ENCODE measurements at regions of chr9 and their contacts with region 1.

Region 1: DNA sequence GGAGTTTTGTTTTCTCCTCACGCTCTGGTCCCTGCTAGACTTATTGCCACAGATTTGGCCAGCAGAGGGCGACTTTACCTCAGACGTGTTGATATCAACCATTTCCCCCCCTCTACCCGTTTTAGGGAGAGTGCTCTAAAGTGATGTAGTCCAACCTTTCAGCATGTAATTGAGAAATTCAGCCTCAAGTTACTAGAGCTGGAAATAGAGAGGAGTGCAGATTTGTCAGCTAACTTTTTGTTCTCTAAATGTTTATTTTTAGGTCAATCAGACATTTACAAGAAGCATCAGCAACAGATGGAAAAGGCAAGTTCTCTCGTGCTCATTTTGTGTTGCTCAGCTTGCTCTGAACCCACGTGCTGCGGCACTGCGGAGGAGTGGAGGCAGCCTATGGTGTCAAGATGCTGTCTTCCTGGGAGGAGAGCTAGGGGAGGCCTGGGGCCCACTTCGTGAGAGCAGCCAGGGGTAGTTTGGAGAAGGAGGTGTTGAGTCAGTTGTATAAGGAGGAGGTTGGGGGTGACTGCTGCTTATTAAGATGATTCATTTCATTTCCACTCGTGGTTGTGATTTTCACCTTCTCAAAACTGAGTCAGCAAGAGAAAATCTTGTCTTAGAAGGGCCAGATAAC is 53.6 kb downstream of the GPR107 start:
- DNase-seq: peak; percentile 87
- H3K4me3 ChIP-seq: no peak overlapping the region
- H3K27ac ChIP-seq: no peak overlapping the region
- H3K4me1 ChIP-seq: no peaks in the 10 kb centered on the region
- H3K27me3 ChIP-seq: no peaks in the 10 kb centered on the region
- CTCF ChIP-seq: peak; percentile 93

Region 2: DNA sequence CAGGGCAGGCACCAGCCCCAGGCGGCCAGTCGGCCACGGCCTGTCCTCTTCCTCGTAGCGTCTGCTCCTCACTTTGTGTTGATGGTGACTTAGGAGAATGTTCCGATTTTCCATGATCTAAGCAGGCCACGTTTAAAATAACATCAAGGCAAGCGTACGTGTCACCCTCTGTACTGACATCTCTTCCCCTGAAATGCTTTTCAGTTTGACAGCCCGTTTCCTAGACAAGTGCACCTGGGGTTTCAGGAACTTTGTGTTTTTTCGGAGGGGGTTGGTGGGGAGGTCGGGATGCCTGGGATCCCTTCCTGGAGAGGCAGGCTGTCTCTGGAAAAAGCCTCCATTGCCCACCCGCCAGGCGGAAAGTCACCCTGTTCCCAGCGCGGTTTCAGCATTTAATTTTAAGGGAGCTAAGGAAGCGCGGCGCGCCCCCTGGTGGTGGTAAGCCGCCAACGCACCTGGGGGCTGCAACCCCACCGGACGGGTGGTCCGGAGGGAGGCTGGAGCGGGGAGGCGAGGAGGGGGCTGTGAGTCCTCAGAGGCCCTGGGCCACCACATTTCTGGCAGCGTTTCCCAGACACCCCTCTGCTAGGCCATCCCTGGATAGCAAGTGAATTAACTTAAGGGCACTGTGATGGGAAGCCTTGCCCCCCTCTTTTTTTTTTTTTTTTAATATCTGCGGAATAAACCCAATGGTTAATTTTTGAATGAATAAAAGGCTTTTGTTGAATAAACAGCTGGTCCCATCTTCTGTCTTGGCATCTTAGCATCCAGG is 128.7 kb after region 1 on chr9:
- CTCF ChIA-PET with region 1: interaction called, 3 read pairs
- POLR2A ChIA-PET with region 1: no interaction called
- intact Hi-C with region 1: loop called (anchors 1 kb)
- DNase-seq: peak; percentile 77
- H3K4me3 ChIP-seq: no peak overlapping the region
- H3K27ac ChIP-seq: no peak overlapping the region
- H3K4me1 ChIP-seq: peaks cover 3% of the 10 kb centered on the region
- H3K27me3 ChIP-seq: no peaks in the 10 kb centered on the region
- CTCF ChIP-seq: peak; percentile 99

Region 3: GRCh38 chr9:130343445-130343918 is 236.1 kb after region 1 on chr9:
- CTCF ChIA-PET with region 1: interaction called, 3 read pairs
- POLR2A ChIA-PET with region 1: no interaction called
- intact Hi-C with region 1: loop called (anchors 2 kb)
- DNase-seq: peak; percentile 21
- H3K4me3 ChIP-seq: no peak overlapping the region
- H3K27ac ChIP-seq: no peak overlapping the region
- H3K4me1 ChIP-seq: no peaks in the 10 kb centered on the region
- H3K27me3 ChIP-seq: no peaks in the 10 kb centered on the region
- CTCF ChIP-seq: peak; percentile 95

Measured in A673 (cell line).